H1 (cell line): ENCODE measurements at regions of chr3 and their contacts with region 1.

Region 1: GRCh38 chr3:14203521-14204079 is 25.0 kb downstream of the LSM3 start:
- DNase-seq: peak in 1 of 2 experiments; percentile 65
- H3K4me3 ChIP-seq: no peak overlapping the region
- H3K27ac ChIP-seq: no peak overlapping the region
- H3K4me1 ChIP-seq: no peaks in the 10 kb centered on the region; a peak in 2 of 7 replicates
- H3K27me3 ChIP-seq: no peaks in the 10 kb centered on the region
- CTCF ChIP-seq: peak; percentile 46 to 96 (median 89)
- EP300 ChIP-seq: no peak
- POLR2A ChIP-seq: no peak
- RAD21 ChIP-seq: peak; percentile 90 to 92

Region 2: DNA sequence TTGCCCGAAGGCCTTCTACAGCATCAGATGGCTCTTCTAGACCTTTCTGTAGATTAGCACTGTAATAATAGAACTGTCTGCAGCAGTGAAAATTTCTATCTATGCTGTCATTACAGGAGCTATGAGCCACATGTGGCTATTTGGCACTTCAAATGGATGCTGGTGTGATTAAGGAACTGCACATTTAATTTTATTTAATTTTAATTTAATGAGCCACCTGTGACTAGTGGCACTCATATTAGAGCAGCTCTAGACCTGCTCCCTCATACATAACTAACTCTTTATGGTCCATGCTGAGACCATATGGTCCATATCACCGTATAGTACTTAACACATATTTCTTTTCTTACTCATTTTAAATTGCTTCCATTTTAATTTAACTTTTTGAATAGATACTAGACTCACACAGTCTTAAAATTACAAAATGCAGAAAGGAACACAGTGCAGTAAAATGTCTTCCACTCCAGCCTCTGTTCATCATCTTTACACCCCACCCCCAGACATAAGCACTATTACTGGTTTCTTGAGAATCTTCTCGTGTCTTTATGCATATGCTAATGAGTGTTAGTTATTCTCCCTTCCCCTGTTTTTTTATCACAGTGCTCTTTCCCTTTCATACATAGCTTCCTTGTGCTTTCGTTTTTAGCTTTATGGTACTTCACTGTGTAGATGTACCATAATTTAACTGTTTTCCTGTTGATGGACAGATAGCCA is 15.4 kb before region 1 on chr3:
- CTCF ChIA-PET with region 1: interaction called, 17 read pairs
- POLR2A ChIA-PET with region 1: no interaction called
- DNase-seq: no peak
- H3K4me3 ChIP-seq: no peak overlapping the region
- H3K27ac ChIP-seq: no peak overlapping the region
- H3K4me1 ChIP-seq: no peaks in the 10 kb centered on the region
- H3K27me3 ChIP-seq: peaks cover 0 to 1% (median 0%) of the 10 kb centered on the region in 4 experiments; a peak in 1 of 7 replicates
- CTCF ChIP-seq: no peak
- EP300 ChIP-seq: no peak
- POLR2A ChIP-seq: no peak
- RAD21 ChIP-seq: no peak

Region 3: GRCh38 chr3:14228648-14229470 is 25.3 kb after region 1 on chr3:
- CTCF ChIA-PET with region 1: interaction called, 21 read pairs
- POLR2A ChIA-PET with region 1: no interaction called
- DNase-seq: no peak
- H3K4me3 ChIP-seq: no peak overlapping the region
- H3K27ac ChIP-seq: no peak overlapping the region
- H3K4me1 ChIP-seq: peaks cover 0 to 5% (median 0%) of the 10 kb centered on the region in 4 experiments; a peak in 1 of 7 replicates
- H3K27me3 ChIP-seq: no peaks in the 10 kb centered on the region
- CTCF ChIP-seq: no peak
- EP300 ChIP-seq: no peak
- POLR2A ChIP-seq: no peak
- RAD21 ChIP-seq: no peak

Region 4: GRCh38 chr3:14266361-14266760 is 62.8 kb after region 1 on chr3:
- CTCF ChIA-PET with region 1: interaction called, 17 read pairs
- POLR2A ChIA-PET with region 1: no interaction called
- DNase-seq: no peak
- H3K4me3 ChIP-seq: no peak overlapping the region
- H3K27ac ChIP-seq: no peak overlapping the region
- H3K4me1 ChIP-seq: no peaks in the 10 kb centered on the region
- H3K27me3 ChIP-seq: 0 out of 7 replicates have a peak, but pooled peaks cover 0 to 3% (median 0%) of the 10 kb centered on the region in 4 experiments
- CTCF ChIP-seq: no peak
- EP300 ChIP-seq: no peak
- POLR2A ChIP-seq: no peak
- RAD21 ChIP-seq: no peak

Region 5: GRCh38 chr3:14461748-14462324 is 258.2 kb after region 1 on chr3:
- CTCF ChIA-PET with region 1: interaction called, 40 read pairs
- POLR2A ChIA-PET with region 1: no interaction called
- DNase-seq: no peak
- H3K4me3 ChIP-seq: no peak overlapping the region
- H3K27ac ChIP-seq: no peak overlapping the region
- H3K4me1 ChIP-seq: peaks cover 0 to 8% (median 5%) of the 10 kb centered on the region in 4 experiments; a peak in 6 of 7 replicates
- H3K27me3 ChIP-seq: no peaks in the 10 kb centered on the region
- CTCF ChIP-seq: peak in 2 of 3 experiments; percentile 77 to 99; a peak in 3 of 4 replicates
- EP300 ChIP-seq: no peak
- POLR2A ChIP-seq: no peak
- RAD21 ChIP-seq: peak; percentile 79 to 83

Region 6: DNA sequence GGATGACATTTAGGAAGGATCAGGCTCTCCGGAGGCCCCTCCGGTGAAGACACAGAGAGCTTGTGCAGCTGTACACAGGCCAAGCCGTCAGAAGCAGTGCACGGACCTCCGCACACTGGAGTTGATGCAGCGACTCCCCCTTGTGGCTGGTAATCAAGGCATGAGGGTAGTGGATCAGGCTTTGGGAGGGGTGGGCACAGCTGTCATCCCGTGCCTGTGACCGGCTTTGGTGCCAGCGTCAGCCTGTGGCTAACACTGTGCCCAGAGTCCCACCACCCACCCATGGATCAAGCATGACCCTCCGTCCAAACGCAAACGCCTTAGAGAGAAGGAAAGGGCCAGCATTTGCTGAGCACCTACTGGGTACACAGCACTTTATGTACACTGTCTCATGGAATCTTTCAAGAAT is 344.7 kb after region 1 on chr3:
- CTCF ChIA-PET with region 1: interaction called, 16 read pairs
- POLR2A ChIA-PET with region 1: no interaction called
- DNase-seq: peak; percentile 23 to 76
- H3K4me3 ChIP-seq: no peak overlapping the region
- H3K27ac ChIP-seq: no peak overlapping the region
- H3K4me1 ChIP-seq: peaks cover 0 to 3% (median 0%) of the 10 kb centered on the region in 4 experiments; a peak in 1 of 7 replicates
- H3K27me3 ChIP-seq: no peaks in the 10 kb centered on the region
- CTCF ChIP-seq: peak; percentile 92 to 97 (median 94)
- EP300 ChIP-seq: no peak
- POLR2A ChIP-seq: no peak
- RAD21 ChIP-seq: peak; percentile 81 to 91